Heart right ventricle (tissue), 16 donors: ENCODE measurements at regions of chr9 and their contacts with region 1.

Region 1: GRCh38 chr9:35732122-35732799 is at the starts of genes CREB3 and TLN1:
- DNase-seq: peak; percentile 97 to 98
- ATAC-seq: peak; percentile 87 to 94 (median 92)
- H3K4me3 ChIP-seq: peak within 1 kb of the TSS; percentile 65 to 98 (median 80)
- H3K27ac ChIP-seq: peak within 1 kb of the TSS; percentile 93 to 99 (median 98)
- H3K4me1 ChIP-seq: peaks cover 43 to 76% (median 56%) of the 10 kb centered on the region in 9 donors
- H3K27me3 ChIP-seq: no peaks in the 10 kb centered on the region
- CTCF ChIP-seq: peak in 3 of 9 donors; percentile 6 to 26 (median 13)
- total RNA-seq, gene CREB3: 16.2 to 29.5 (median 20.2) TPM
- total RNA-seq, gene TLN1: 206 to 323 (median 238) TPM

Region 2: GRCh38 chr9:35374436-35374835 is 357.8 kb before region 1 on chr9:
- intact Hi-C with region 1: no loop called
- DNase-seq: no peak
- ATAC-seq: no peak
- H3K4me3 ChIP-seq: no peak overlapping the region
- H3K27ac ChIP-seq: no peak overlapping the region
- H3K4me1 ChIP-seq: peaks cover 0 to 19% (median 3%) of the 10 kb centered on the region in 9 donors
- H3K27me3 ChIP-seq: no peaks in the 10 kb centered on the region
- CTCF ChIP-seq: no peak

Region 3: DNA sequence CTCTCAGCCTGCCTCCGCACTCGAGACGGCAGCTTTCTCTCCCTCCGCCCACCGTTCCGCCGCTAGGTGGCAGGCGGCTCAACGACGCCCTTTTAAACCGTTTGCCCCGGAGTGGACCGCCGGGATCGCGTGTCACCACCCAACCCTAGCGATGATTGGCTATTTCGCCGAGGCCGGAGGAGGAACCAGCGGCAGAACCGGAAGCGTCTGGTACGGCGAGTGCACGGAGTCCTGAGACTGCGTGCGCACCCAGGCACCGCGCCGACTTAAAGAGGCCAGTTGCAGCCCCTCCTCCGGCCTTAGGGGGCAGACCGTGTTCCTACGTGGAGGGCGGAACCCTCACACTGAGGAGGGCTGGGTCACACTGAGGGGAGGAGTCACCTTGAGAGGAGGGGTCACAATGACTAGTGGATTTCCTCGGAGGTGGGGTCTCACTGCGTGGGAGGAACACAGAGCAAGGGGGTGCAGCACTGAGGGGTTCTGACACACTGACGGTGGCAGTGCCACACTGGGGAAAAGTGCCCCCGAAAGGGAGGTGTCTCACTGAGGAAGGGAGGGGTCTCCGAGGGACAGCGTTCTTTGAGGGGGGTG is 128.2 kb before region 1 on chr9:
- intact Hi-C with region 1: loop called in 2 of 10 experiments (anchors 5 kb)
- DNase-seq: peak; percentile 99 to 100
- ATAC-seq: peak; percentile 92 to 98 (median 96)
- H3K4me3 ChIP-seq: peak overlapping the region; percentile 56 to 93 (median 73)
- H3K27ac ChIP-seq: peak overlapping the region; percentile 72 to 95 (median 92)
- H3K4me1 ChIP-seq: peaks cover 0 to 38% (median 25%) of the 10 kb centered on the region in 9 donors
- H3K27me3 ChIP-seq: no peaks in the 10 kb centered on the region
- CTCF ChIP-seq: peak; percentile 86 to 99 (median 95)

Region 4: DNA sequence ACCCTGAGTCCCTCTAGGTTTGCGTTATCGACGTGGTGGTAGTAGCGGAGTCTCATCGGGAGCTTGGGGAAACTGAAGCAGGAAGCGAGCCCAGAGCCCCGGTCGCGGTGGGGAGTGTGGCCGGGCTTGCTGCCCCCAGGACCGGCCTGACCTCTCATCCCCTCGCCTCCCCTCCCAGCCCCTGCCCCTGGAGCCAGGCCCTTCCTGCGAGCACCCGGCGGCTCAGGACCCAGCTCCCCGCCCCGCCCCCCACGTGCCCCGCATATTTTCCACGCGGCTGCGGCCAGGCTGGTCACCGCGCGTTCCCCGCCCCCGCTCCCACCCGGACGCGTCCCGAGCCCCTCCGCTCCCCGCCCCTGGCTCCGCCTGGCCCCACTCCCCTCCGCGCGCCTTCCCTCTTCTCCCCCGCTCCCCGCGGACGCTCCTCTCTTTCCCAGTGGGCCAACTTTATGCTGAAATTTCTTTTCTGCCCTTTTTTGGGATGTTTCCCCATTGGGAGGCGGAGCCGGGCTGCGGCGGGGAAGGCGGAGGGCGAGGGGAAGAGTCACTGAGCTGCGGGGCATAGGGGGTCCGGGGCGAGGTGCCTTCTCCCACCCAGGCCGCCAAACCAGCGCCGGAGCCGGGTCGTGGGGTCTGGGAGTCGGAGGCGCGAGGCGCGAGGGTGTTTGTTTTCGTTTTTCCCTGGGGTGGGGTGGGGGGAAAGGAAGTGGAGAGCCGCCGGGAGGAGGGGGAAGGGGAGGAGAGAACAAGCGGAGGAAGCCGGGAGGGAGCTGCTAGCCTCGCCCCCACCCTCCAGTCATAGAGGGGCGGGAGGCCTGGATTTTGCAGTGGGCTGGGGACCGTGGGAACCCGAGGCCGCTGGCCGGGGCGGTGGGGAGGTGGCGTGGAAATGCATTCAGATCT is 41.6 kb before region 1 on chr9:
- intact Hi-C with region 1: loop called in 5 of 10 experiments (anchors 2 to 5 kb)
- DNase-seq: peak; percentile 84 to 90
- ATAC-seq: peak; percentile 59 to 75 (median 66)
- H3K4me3 ChIP-seq: peak overlapping the region; percentile 33 to 86 (median 71)
- H3K27ac ChIP-seq: peak overlapping the region; percentile 72 to 100 (median 94)
- H3K4me1 ChIP-seq: peaks cover under 1 to 48% (median 45%) of the 10 kb centered on the region in 9 donors
- H3K27me3 ChIP-seq: peaks cover 0 to 8% (median 0%) of the 10 kb centered on the region in 7 donors
- CTCF ChIP-seq: no peak

Region 5: DNA sequence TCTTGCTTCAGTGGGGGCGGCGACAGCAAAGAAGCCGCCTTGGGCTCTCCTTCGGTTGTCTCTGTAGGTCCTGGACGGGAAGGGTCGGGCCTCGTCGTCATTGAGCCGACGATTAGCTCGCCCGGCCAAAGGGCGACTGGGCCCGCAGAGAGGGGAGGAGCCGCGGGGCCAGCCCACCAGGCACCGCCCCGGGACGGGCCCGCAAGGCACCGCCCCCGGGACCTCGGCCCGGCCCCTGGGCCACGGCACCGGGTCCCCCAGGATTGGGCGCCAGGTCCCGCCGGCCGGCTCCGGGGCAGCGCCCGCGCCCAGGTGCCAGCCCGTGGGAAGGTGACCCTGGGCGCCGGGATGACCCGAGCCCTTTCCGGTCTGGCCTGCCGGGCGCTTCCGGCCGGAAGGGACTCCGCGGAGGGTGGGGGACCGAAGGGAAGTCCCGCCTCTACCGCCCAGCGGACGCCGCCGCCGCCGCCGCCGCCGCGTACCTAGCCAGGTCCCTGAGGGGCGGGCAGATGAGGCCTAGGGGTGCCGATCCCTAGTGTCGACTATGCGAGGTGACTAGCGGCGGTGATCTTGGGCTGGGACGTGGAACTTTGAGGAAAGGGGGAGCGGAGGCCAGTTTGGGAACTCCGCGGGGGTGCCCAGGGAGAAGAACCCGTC is 16.7 kb after region 1 on chr9 and contains the starts of genes GBA2 and RGP1:
- intact Hi-C with region 1: loop called in 4 of 10 experiments (anchors 1 to 2 kb)
- DNase-seq: peak; percentile 82 to 90
- ATAC-seq: peak; percentile 90 to 95 (median 92)
- H3K4me3 ChIP-seq: peak within 1 kb of the TSS; percentile 71 to 99 (median 92)
- H3K27ac ChIP-seq: peak within 1 kb of the TSS; percentile 88 to 99 (median 98)
- H3K4me1 ChIP-seq: peaks cover 7 to 64% (median 54%) of the 10 kb centered on the region in 9 donors
- H3K27me3 ChIP-seq: no peaks in the 10 kb centered on the region
- CTCF ChIP-seq: no peak
- total RNA-seq, gene GBA2: 47.4 to 101 (median 74.7) TPM
- total RNA-seq, gene RGP1: 31.1 to 39.4 (median 34.0) TPM

Region 6: DNA sequence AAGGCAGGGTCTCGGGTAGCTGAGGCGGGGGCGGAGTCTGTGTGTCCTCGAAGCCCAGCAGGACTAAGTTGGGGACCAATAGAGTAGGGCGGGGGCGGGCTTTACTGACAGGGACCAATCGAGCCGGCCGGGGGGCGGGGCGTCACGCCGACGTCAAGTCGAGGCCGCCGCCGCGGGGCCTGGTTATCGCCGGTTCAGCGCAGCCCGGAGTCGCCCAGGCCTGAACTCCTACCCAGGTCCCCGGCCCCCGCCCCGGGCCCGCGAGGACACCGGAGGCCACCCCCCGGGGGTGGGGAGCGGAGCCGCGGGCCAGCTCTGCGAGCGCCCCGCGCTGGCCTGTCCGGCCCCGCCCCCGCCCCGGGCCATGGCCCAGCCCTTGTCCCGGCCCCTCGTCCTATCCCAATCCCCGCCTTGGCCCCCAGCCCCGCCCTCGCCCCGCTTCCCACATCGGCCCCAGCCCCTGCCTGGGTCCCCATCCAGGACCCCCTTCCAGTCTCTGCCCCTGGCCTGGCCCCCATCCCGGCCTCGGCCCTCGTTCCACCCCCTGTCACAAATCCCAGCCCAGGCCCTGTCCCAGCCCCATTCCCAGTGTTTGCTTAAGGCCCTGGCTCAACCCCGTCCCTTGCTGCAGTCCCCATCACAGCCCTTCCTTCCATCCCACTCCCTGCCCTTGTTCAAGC is 97.0 kb after region 1 on chr9 and contains the start of gene TMEM8B:
- intact Hi-C with region 1: loop called in 1 of 10 experiments (anchors 5 kb)
- DNase-seq: peak; percentile 96 to 98
- ATAC-seq: peak; percentile 91 to 94 (median 92)
- H3K4me3 ChIP-seq: peak within 1 kb of the TSS; percentile 70 to 87 (median 82)
- H3K27ac ChIP-seq: peak within 1 kb of the TSS; percentile 91 to 98 (median 96)
- H3K4me1 ChIP-seq: peaks cover 4 to 53% (median 39%) of the 10 kb centered on the region in 9 donors
- H3K27me3 ChIP-seq: no peaks in the 10 kb centered on the region
- CTCF ChIP-seq: no peak
- total RNA-seq, gene TMEM8B: 13.6 to 22.9 (median 20.5) TPM

Region 7: GRCh38 chr9:36190388-36191287 is 458.4 kb after region 1 on chr9 and contains the start of gene CLTA:
- intact Hi-C with region 1: no loop called
- DNase-seq: peak; percentile 92 to 98
- ATAC-seq: peak; percentile 99 to 100 (median 99)
- H3K4me3 ChIP-seq: peak within 1 kb of the TSS; percentile 64 to 97 (median 85)
- H3K27ac ChIP-seq: peak within 1 kb of the TSS; percentile 48 to 95 (median 88)
- H3K4me1 ChIP-seq: peaks cover 12 to 45% (median 38%) of the 10 kb centered on the region in 9 donors
- H3K27me3 ChIP-seq: no peaks in the 10 kb centered on the region
- CTCF ChIP-seq: peak in 8 of 9 donors; percentile 40 to 72 (median 58)
- total RNA-seq, gene CLTA: 44.5 to 80.4 (median 48.8) TPM